ENCODE measurements at regions of chr1 and their contacts with region 1.

Region 1: DNA sequence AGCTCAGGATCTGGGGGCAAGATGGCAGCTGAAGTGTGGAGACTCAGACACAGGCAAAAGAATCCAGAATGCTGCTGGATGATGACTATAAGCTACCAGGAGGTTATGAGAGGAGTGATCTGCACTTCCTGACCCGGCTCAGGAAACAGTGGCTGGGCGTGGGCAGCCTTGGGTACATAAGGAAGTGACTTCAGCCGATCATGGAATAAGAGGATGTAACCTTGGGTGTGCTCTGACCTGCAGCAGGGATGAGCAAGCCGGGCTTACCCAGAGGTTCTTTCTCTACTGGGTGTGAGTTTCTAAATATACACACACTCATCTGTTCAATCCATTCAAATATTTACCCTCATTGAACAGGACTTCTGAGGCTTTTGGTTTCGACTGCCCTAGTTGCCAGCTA is 62.7 kb downstream of the CD34 start:
- DNase-seq: no peak
- H3K4me3 Mint-ChIP-seq: peak overlapping the region; percentile 64
- H3K27ac Mint-ChIP-seq: peak overlapping the region; percentile 90
- H3K4me1 Mint-ChIP-seq: peaks cover 68% of the 10 kb centered on the region
- H3K27me3 Mint-ChIP-seq: no peaks in the 10 kb centered on the region

Region 2: GRCh38 chr1:207863893-207864535 is 15.8 kb after region 1 on chr1:
- intact Hi-C with region 1: loop called (anchors 1 kb)
- DNase-seq: peak; percentile 40
- H3K4me3 Mint-ChIP-seq: peak overlapping the region; percentile 68
- H3K27ac Mint-ChIP-seq: peak overlapping the region; percentile 85
- H3K4me1 Mint-ChIP-seq: no peaks in the 10 kb centered on the region
- H3K27me3 Mint-ChIP-seq: no peaks in the 10 kb centered on the region

Region 3: DNA sequence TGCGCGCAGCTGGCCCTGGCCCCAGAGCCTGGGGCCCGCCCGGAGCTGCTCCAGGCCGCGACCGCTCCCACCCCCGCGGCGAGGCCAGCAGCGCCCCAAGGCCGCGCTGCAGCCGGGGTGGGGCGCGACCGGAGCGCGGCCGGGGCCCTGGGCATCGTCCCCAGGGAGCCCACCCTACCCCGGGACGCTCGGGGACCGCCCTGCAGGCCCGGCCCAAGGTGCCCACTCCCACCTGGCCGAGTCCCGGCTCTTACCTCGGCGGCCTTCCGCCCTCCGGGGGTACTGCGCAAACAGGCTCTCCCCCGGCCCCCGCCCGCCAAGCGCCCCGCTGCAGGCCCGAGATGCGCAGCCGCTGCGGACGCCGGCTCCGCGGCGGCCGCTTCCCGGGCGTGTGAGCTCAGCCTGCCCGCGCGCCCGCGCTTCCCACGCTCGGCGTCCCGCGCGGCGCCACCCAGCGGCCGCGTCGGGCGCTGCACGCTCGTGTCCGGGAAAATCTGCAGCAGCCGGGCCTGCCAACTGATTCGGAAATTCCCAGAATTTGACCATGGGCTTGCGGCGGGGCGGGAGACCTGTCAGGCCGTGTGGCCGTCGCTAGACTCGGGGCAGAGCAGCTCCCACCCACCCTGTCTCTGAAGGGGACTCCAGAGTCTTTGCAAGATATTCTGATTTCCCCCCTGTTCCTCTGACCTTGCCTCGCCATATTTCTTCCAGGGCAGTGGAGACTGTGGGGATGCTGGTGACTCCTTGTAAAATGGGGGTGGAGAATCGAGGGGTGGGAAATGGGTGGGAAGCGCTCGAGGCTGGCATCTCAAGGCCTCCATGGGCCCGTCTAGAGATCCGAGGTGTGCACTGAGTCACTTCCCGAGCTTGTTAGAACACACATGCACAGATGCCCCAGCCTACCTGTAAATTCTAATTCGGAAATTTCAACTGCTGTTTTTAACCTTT is 20.8 kb after region 1 on chr1:
- intact Hi-C with region 1: loop called (anchors 1 kb)
- DNase-seq: peak; percentile 69
- H3K4me3 Mint-ChIP-seq: peak overlapping the region; percentile 92
- H3K27ac Mint-ChIP-seq: peak overlapping the region; percentile 96
- H3K4me1 Mint-ChIP-seq: peaks cover 45% of the 10 kb centered on the region
- H3K27me3 Mint-ChIP-seq: no peaks in the 10 kb centered on the region

Region 4: GRCh38 chr1:207925210-207925609 is 77.0 kb after region 1 on chr1:
- intact Hi-C with region 1: no loop called
- DNase-seq: no peak
- H3K4me3 Mint-ChIP-seq: no peak overlapping the region
- H3K27ac Mint-ChIP-seq: no peak overlapping the region
- H3K4me1 Mint-ChIP-seq: no peaks in the 10 kb centered on the region
- H3K27me3 Mint-ChIP-seq: peaks cover 41% of the 10 kb centered on the region